ENCODE measurements at regions of chr5 and their contacts with region 1.

Region 1: GRCh38 chr5:91311697-91312501 is 71.2 kb downstream of the ARRDC3 start:
- DNase-seq: peak; percentile 77
- ATAC-seq: peak; percentile 77
- H3K4me3 Mint-ChIP-seq: peak overlapping the region; percentile 63
- H3K27ac Mint-ChIP-seq: peak overlapping the region; percentile 82
- H3K4me1 Mint-ChIP-seq: peaks cover 49% of the 10 kb centered on the region
- H3K27me3 Mint-ChIP-seq: no peaks in the 10 kb centered on the region

Region 2: GRCh38 chr5:91162534-91163381 is 149.1 kb before region 1 on chr5:
- CTCF ChIA-PET with region 1: no interaction called
- POLR2A ChIA-PET with region 1: no interaction called
- intact Hi-C with region 1: loop called (anchors 1 to 2 kb)
- DNase-seq: peak; percentile 85
- ATAC-seq: peak; percentile 99
- H3K4me3 Mint-ChIP-seq: no peak overlapping the region
- H3K27ac Mint-ChIP-seq: peak overlapping the region; percentile 74
- H3K4me1 Mint-ChIP-seq: peaks cover 21% of the 10 kb centered on the region
- H3K27me3 Mint-ChIP-seq: peaks cover 1% of the 10 kb centered on the region

Region 3: DNA sequence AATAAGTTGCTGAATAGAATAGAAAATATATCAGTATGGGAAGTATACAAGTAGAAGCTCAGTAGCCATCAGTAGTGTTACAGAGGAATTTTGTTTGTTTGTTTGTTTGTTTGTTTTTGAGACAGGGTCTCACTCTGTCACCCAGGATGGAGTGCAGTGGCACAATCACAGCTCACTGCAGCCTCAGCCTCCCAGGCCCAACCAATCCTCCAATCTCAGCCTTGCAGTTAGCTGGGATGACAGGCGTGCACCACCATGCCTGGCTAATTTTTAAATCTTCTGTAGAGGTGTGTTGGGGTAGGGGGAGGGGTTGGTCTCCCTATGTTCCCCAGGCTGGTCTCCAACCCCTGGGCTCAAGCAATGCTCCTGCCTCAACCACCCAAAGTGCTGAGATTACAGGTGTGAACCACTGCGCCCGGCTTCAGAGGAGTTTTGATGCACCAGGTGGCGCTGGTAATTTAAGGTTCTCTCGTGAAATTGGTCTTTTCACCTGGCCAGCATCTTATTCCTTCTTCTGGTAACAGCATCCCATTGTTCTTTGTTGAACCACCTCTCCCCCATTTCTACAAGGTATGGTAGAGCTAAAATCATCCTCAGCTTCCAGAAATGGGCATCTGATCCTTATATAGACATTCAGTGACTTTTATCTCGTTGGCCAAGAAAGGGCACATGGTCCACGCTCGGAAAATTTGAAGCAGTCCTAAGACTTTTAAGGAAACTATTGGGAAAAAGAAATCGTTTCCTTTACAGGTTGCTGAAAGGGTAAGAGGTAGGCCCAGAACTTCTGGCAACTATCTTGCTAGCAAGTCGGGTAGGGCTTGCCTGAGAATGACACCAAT is 85.8 kb before region 1 on chr5:
- CTCF ChIA-PET with region 1: interaction called, 3 read pairs
- POLR2A ChIA-PET with region 1: no interaction called
- intact Hi-C with region 1: loop called (anchors 2 kb)
- DNase-seq: peak; percentile 79
- ATAC-seq: peak; percentile 75
- H3K4me3 Mint-ChIP-seq: no peak overlapping the region
- H3K27ac Mint-ChIP-seq: no peak overlapping the region
- H3K4me1 Mint-ChIP-seq: no peaks in the 10 kb centered on the region
- H3K27me3 Mint-ChIP-seq: peaks cover 7% of the 10 kb centered on the region

Region 4: DNA sequence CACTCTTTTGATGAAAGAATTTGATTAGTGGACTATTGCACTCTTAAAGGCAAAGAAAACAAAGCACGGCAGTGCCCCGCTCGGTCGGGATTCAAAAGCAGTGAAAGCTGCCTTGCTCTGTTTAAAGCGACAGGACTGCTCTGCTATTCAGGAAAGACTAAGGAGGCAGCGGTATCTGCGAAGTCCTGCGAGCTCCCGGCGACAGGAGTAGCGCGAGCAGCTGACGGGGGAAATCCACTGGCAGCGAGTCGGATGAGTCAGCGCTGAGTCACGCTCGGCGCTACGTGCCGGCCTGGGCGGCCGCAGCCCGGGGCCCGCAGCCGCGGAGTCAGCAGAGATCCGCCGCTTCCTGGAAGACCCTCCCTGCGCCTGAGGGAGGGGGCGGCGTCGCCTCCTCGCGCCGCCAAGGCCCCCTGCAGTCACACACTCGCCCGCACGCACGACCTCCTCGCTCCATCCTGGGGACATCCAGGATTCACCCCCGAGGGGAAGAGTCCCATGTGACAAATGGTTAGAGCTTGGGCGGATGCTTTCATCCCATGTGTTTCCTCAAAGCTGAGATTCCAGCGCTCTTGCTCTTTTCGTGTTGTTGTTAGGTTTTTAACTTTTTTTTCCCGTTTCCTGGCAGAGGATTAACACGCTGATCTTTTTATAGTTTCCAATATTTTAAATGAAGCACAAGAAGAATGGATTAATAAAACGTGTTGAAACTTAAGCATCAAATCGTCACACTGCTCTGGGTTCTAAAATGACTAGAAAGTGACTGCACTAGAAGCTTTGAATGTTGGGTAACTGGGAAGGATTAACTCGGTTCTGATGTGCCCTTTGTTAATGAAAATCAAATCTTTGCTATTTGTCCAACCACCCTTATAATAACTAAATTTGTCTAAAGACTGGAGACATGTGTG is 31.3 kb before region 1 on chr5:
- CTCF ChIA-PET with region 1: interaction called, 5 read pairs
- POLR2A ChIA-PET with region 1: interaction called, 6 read pairs
- intact Hi-C with region 1: loop called (anchors 1 kb)
- DNase-seq: peak; percentile 97
- ATAC-seq: peak; percentile 80
- H3K4me3 Mint-ChIP-seq: peak overlapping the region; percentile 76
- H3K27ac Mint-ChIP-seq: peak overlapping the region; percentile 99
- H3K4me1 Mint-ChIP-seq: peaks cover 53% of the 10 kb centered on the region
- H3K27me3 Mint-ChIP-seq: no peaks in the 10 kb centered on the region

Region 5: GRCh38 chr5:91361055-91361701 is 49.3 kb after region 1 on chr5:
- CTCF ChIA-PET with region 1: no interaction called
- POLR2A ChIA-PET with region 1: no interaction called
- intact Hi-C with region 1: loop called (anchors 1 kb)
- DNase-seq: peak; percentile 12
- ATAC-seq: peak; percentile 77
- H3K4me3 Mint-ChIP-seq: peak overlapping the region; percentile 24
- H3K27ac Mint-ChIP-seq: peak overlapping the region; percentile 51
- H3K4me1 Mint-ChIP-seq: peaks cover 10% of the 10 kb centered on the region
- H3K27me3 Mint-ChIP-seq: peaks cover 7% of the 10 kb centered on the region

Region 6: GRCh38 chr5:91730026-91730425 is 418.1 kb after region 1 on chr5:
- CTCF ChIA-PET with region 1: no interaction called
- POLR2A ChIA-PET with region 1: no interaction called
- intact Hi-C with region 1: no loop called
- DNase-seq: no peak
- ATAC-seq: no peak
- H3K4me3 Mint-ChIP-seq: no peak overlapping the region
- H3K27ac Mint-ChIP-seq: no peak overlapping the region
- H3K4me1 Mint-ChIP-seq: no peaks in the 10 kb centered on the region
- H3K27me3 Mint-ChIP-seq: no peaks in the 10 kb centered on the region

Measured in activated CD4-positive, alpha-beta T cell treated with anti-CD3 and anti-CD28 coated beads for 36 hours (primary cell).